ENCODE measurements at regions of chr1 and their contacts with region 1.

Region 1: GRCh38 chr1:226736908-226737818 is 1.9 kb downstream of the ITPKB start:
- DNase-seq: peak; percentile 46 to 81 (median 56)
- H3K4me3 ChIP-seq: peak overlapping the region; percentile 93
- H3K4me3 Mint-ChIP-seq: peak overlapping the region; percentile 88 to 100 (median 96)
- H3K27ac ChIP-seq: peak overlapping the region; percentile 78
- H3K27ac Mint-ChIP-seq: peak overlapping the region; percentile 50 to 100 (median 89)
- H3K4me1 ChIP-seq: peaks cover 45% of the 10 kb centered on the region
- H3K4me1 Mint-ChIP-seq: peaks cover 54 to 64% (median 58%) of the 10 kb centered on the region in 3 donors
- H3K27me3 ChIP-seq: no peaks in the 10 kb centered on the region
- H3K27me3 Mint-ChIP-seq: peaks cover 0 to 4% of the 10 kb centered on the region in 2 donors

Region 2: DNA sequence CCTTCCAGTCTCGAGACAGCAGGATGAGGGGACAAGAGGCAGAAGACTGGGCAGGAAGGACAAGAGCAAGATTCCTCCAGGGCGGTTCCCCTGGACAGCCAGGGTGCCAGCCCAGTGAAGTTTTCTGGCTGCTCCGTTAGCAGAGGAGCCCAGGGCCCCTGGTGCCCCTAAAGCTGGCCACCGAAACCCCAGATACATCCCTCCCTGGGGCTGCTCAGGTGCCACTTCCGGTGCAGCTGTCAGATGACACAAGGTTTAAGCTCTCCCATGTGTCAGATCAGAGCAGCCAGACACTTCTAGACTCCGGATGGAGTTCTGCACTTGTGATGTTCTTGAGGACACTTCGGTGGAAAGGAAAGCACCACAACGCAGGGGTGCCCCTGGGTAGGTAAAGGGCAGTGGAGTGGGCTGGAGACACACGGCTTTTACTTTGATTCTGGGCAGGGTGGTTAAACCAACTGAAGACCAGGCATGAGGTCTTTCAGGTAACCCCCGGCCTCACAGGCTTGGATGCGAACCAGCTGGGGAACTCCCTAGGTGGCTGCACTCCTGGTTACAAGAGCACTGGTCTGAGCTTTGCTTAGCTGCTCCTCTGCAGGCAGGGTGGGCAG is 83.7 kb before region 1 on chr1:
- CTCF ChIA-PET with region 1: interaction called, 7 read pairs
- POLR2A ChIA-PET with region 1: interaction called, 28 read pairs
- DNase-seq: peak; percentile 68 to 87 (median 83)
- H3K4me3 ChIP-seq: peak overlapping the region; percentile 44
- H3K4me3 Mint-ChIP-seq: peak overlapping the region; percentile 75 to 90 (median 82)
- H3K27ac ChIP-seq: peak overlapping the region; percentile 74
- H3K27ac Mint-ChIP-seq: no peak overlapping the region
- H3K4me1 ChIP-seq: peaks cover 14% of the 10 kb centered on the region
- H3K4me1 Mint-ChIP-seq: peaks cover 0 to 48% (median 24%) of the 10 kb centered on the region in 3 donors
- H3K27me3 ChIP-seq: no peaks in the 10 kb centered on the region
- H3K27me3 Mint-ChIP-seq: peaks cover 0 to 1% of the 10 kb centered on the region in 2 donors

Region 3: GRCh38 chr1:226711976-226712741 is 25.0 kb before region 1 on chr1:
- CTCF ChIA-PET with region 1: interaction called, 14 read pairs
- POLR2A ChIA-PET with region 1: interaction called, 15 read pairs
- DNase-seq: peak; percentile 44 to 83 (median 67)
- H3K4me3 ChIP-seq: peak overlapping the region; percentile 52
- H3K4me3 Mint-ChIP-seq: peak overlapping the region; percentile 66 to 92 (median 77)
- H3K27ac ChIP-seq: peak overlapping the region; percentile 32
- H3K27ac Mint-ChIP-seq: peak overlapping the region; percentile 86 to 95 (median 90)
- H3K4me1 ChIP-seq: peaks cover 88% of the 10 kb centered on the region
- H3K4me1 Mint-ChIP-seq: peaks cover 93 to 99% (median 99%) of the 10 kb centered on the region in 3 donors
- H3K27me3 ChIP-seq: no peaks in the 10 kb centered on the region
- H3K27me3 Mint-ChIP-seq: peaks cover 0 to 7% of the 10 kb centered on the region in 2 donors

Region 4: DNA sequence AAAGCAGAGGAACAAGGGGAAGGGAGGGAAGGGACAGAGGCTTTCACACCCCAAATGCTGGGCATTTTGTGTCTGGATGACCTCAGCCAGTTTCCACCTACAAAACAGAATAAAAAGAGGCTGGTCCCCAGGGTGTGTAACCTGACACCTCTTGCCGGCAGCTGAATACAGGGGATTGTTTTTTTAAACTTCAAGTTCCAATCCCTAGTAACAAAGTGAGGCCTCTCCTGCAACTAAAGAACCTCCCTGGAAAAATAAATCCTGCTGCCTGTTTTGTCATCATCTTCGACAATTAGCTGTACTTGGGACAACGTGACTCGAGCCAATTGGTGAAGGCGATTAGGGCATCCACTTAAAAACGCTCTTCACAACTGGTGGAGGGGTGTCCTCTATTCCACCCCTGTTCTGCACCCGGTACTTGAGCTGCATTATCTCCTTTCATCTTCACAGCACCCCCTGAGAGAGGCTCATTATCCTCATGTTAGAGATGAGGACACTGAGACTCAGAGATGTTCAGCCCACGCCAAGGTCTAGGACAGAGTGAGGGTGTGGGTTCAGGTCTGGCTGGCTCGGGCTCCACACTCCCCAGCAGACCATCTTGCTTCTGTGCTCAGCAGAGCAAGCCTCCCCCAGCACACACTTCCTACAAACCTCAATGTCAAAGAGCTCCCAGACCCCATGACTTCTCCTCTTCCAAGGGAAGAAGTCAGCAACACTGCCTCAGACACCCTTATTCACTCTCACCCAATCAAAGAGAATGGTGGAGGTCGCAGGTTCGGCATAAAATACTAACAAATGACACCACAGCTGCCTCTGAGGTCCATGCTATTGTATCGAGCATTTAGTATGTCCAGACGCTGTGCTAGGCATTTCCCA is 13.3 kb before region 1 on chr1:
- CTCF ChIA-PET with region 1: interaction called, 16 read pairs
- POLR2A ChIA-PET with region 1: interaction called, 7 read pairs
- DNase-seq: peak in 1 of 5 donors; percentile 24
- H3K4me3 ChIP-seq: peak overlapping the region; percentile 58
- H3K4me3 Mint-ChIP-seq: peak overlapping the region; percentile 73 to 97 (median 84)
- H3K27ac ChIP-seq: no peak overlapping the region
- H3K27ac Mint-ChIP-seq: peak overlapping the region; percentile 88 to 100 (median 94)
- H3K4me1 ChIP-seq: peaks cover 99% of the 10 kb centered on the region
- H3K4me1 Mint-ChIP-seq: peaks cover 85 to 95% (median 91%) of the 10 kb centered on the region in 3 donors
- H3K27me3 ChIP-seq: no peaks in the 10 kb centered on the region
- H3K27me3 Mint-ChIP-seq: peaks cover 0 to 1% of the 10 kb centered on the region in 2 donors

Region 5: DNA sequence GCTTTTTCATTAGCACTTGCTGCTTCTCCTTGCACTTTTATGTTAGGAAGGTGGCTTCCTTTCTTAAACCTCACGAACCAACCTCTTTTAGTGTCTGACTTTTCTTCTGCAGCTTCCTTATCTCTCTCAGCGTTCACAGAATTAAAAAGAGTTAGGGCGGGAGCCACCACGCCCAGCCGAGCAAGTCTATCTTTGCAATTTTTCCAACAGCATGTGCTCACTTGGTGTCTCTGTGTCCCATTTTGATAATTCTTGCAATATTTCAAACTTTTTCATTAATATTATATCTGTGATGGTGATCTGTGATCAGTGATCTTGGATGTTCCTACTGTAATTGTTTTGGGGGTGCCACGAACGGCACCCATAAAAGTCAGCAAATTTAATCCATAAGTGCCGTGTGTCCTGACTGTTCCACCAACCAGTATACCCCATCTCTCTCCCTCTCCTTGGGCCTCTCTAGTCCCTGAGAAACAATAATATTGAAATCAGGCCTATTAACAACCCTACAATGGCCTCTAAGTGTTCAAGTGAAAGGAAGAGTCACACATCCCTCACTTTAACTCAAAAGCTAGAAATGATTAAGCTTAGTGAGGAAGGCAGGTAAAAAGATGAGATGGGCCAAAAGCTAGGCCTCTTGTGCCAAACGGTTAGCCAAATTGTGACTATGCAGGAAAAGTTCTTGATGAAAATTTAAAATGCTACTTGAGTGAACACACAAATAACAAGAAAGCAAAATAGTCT is 17.8 kb after region 1 on chr1:
- CTCF ChIA-PET with region 1: interaction called, 3 read pairs
- POLR2A ChIA-PET with region 1: interaction called, 13 read pairs
- DNase-seq: no peak
- H3K4me3 ChIP-seq: no peak overlapping the region
- H3K4me3 Mint-ChIP-seq: no peak overlapping the region
- H3K27ac ChIP-seq: no peak overlapping the region
- H3K27ac Mint-ChIP-seq: peak overlapping the region in 1 of 8 donors; percentile 4
- H3K4me1 ChIP-seq: peaks cover 19% of the 10 kb centered on the region
- H3K4me1 Mint-ChIP-seq: peaks cover 12 to 19% (median 14%) of the 10 kb centered on the region in 3 donors
- H3K27me3 ChIP-seq: no peaks in the 10 kb centered on the region
- H3K27me3 Mint-ChIP-seq: peaks cover 0 to 3% of the 10 kb centered on the region in 2 donors

Region 6: DNA sequence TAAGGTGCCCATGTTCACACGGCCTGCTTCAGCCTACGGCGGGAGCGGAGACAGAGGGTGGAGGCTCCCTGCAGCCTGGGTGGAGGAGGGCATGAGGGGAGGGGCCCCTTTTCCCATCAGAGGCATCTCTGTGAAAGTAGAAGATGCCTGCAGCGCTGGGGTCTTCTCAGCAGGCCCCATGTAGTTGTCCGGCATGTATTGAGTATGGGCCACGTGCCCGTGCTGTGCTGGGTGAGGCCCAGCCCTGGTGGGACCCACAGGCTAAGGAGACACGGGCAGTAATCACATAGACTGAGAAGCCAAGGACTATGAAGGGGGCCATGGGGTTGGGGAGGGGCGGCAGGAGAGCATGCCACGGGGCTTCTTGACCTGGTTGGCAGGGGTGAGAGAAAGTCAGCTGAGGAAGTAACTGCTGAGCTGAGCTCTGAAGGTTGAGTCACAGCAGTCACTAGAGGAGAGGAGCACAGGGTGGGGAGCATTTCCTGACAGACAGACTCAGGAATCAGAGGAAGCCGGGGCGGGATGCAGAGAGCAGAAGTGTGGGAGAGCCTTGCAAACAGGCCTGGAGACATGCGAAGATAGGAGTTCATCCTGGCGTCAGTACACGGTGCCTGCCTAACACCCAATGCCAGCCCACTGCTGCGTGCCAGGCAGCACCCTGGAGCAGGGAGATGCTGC is 154.8 kb after region 1 on chr1:
- CTCF ChIA-PET with region 1: no interaction called
- POLR2A ChIA-PET with region 1: interaction called, 17 read pairs
- DNase-seq: no peak
- H3K4me3 ChIP-seq: no peak overlapping the region
- H3K4me3 Mint-ChIP-seq: no peak overlapping the region
- H3K27ac ChIP-seq: no peak overlapping the region
- H3K27ac Mint-ChIP-seq: no peak overlapping the region
- H3K4me1 ChIP-seq: no peaks in the 10 kb centered on the region
- H3K4me1 Mint-ChIP-seq: no peaks in the 10 kb centered on the region
- H3K27me3 ChIP-seq: no peaks in the 10 kb centered on the region
- H3K27me3 Mint-ChIP-seq: no peaks in the 10 kb centered on the region